ENCODE measurements at regions of chr11 and their contacts with region 1.

Region 1: GRCh38 chr11:79100093-79100910 is 340.5 kb downstream of the TENM4 start:
- DNase-seq: no peak
- ATAC-seq: peak; percentile 57 to 75
- H3K4me3 ChIP-seq: no peak overlapping the region
- H3K27ac ChIP-seq: no peak overlapping the region
- H3K4me1 ChIP-seq: peaks cover 9 to 23% of the 10 kb centered on the region in 2 donors
- H3K27me3 ChIP-seq: no peaks in the 10 kb centered on the region
- CTCF ChIP-seq: peak; percentile 44 to 72 (median 70)
- POLR2A ChIP-seq: no peak

Region 2: GRCh38 chr11:78940500-78941225 is 159.6 kb before region 1 on chr11:
- in situ Hi-C with region 1: no loop called
- intact Hi-C with region 1: no loop called
- DNase-seq: no peak
- ATAC-seq: no peak
- H3K4me3 ChIP-seq: no peak overlapping the region
- H3K27ac ChIP-seq: no peak overlapping the region
- H3K4me1 ChIP-seq: peaks cover 3 to 12% of the 10 kb centered on the region in 2 donors
- H3K27me3 ChIP-seq: no peaks in the 10 kb centered on the region
- CTCF ChIP-seq: no peak
- POLR2A ChIP-seq: no peak

Region 3: GRCh38 chr11:79040348-79040747 is 60.0 kb before region 1 on chr11:
- in situ Hi-C with region 1: no loop called
- intact Hi-C with region 1: no loop called
- DNase-seq: no peak
- ATAC-seq: no peak
- H3K4me3 ChIP-seq: no peak overlapping the region
- H3K27ac ChIP-seq: no peak overlapping the region
- H3K4me1 ChIP-seq: no peaks in the 10 kb centered on the region
- H3K27me3 ChIP-seq: no peaks in the 10 kb centered on the region
- CTCF ChIP-seq: no peak
- POLR2A ChIP-seq: no peak

Region 4: DNA sequence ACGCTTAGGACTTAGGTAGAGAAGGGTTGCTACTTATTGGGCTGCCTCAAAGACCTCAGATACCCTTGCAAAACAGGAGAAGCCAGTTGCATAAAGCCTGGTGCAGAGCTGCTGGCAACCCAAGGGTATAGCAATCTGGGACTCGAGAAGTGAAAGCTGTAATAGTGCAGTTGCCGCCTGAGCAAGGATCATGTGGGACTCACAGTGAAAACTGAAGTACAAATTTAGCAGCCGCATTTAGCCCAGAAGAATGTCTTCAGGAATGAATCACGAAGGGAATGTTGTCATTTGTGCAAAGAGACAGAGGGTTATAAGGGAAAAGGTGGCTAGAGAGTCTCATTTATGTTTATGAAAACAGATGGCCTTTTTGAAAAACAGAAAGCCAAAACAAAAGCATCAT is 73.3 kb after region 1 on chr11:
- in situ Hi-C with region 1: no loop called
- intact Hi-C with region 1: no loop called
- DNase-seq: peak; percentile 39 to 55
- ATAC-seq: peak; percentile 87 to 95
- H3K4me3 ChIP-seq: no peak overlapping the region
- H3K27ac ChIP-seq: peak overlapping the region in 1 of 4 donors; percentile 61
- H3K4me1 ChIP-seq: peaks cover 3 to 18% of the 10 kb centered on the region in 2 donors
- H3K27me3 ChIP-seq: no peaks in the 10 kb centered on the region
- CTCF ChIP-seq: no peak
- POLR2A ChIP-seq: no peak

Region 5: DNA sequence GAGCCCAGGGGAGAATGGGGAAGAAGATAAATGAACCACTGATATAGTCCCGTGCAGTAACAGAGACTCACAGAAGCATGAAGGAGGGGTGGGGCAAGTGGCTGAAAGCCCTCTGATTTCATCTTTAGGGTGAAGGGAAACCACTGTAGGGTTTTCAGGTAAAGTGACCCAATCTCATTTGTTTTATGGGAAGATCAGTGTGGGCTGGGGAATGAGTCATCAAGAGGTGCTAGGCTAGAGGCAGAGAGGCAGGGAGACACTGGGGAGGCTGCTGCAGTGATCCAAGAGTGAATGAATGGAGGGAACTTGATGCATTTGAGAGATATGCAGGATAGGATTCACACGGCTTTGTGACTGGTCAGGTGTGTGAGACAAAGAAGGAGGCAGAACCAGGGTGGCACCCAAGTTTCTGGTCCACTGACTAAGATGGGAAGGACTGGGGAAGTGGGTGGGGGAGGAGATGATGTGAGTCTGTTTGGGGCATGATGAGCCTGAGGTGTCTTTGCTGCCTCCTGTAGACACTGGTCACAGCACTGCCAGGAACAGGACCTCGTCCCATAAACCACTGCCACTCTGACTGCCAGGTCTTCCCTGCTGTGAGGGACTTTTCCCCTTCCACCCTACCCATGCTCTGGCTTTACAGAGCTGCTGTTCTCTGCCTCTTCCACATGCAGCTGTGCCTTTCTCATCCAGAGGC is 101.5 kb after region 1 on chr11:
- in situ Hi-C with region 1: loop called in 1 of 4 experiments (anchors 25 kb)
- intact Hi-C with region 1: no loop called
- DNase-seq: no peak
- ATAC-seq: no peak
- H3K4me3 ChIP-seq: no peak overlapping the region
- H3K27ac ChIP-seq: no peak overlapping the region
- H3K4me1 ChIP-seq: no peaks in the 10 kb centered on the region
- H3K27me3 ChIP-seq: no peaks in the 10 kb centered on the region
- CTCF ChIP-seq: no peak
- POLR2A ChIP-seq: no peak

Region 6: GRCh38 chr11:79249341-79249993 is 149.2 kb after region 1 on chr11:
- in situ Hi-C with region 1: no loop called
- intact Hi-C with region 1: no loop called
- DNase-seq: no peak
- ATAC-seq: no peak
- H3K4me3 ChIP-seq: no peak overlapping the region
- H3K27ac ChIP-seq: no peak overlapping the region
- H3K4me1 ChIP-seq: no peaks in the 10 kb centered on the region
- H3K27me3 ChIP-seq: no peaks in the 10 kb centered on the region
- CTCF ChIP-seq: no peak
- POLR2A ChIP-seq: no peak

Measured in gastrocnemius medialis (tissue), 4 donors.